OCI-LY7 (cell line): ENCODE measurements at regions of chr5 and their contacts with region 1.

Region 1: GRCh38 chr5:55575815-55576583 is 41.2 kb upstream of the PLPP1 start:
- DNase-seq: no peak
- H3K4me3 ChIP-seq: no peak overlapping the region
- H3K27ac ChIP-seq: no peak overlapping the region
- H3K4me1 ChIP-seq: no peaks in the 10 kb centered on the region
- CTCF ChIP-seq: no peak

Region 2: DNA sequence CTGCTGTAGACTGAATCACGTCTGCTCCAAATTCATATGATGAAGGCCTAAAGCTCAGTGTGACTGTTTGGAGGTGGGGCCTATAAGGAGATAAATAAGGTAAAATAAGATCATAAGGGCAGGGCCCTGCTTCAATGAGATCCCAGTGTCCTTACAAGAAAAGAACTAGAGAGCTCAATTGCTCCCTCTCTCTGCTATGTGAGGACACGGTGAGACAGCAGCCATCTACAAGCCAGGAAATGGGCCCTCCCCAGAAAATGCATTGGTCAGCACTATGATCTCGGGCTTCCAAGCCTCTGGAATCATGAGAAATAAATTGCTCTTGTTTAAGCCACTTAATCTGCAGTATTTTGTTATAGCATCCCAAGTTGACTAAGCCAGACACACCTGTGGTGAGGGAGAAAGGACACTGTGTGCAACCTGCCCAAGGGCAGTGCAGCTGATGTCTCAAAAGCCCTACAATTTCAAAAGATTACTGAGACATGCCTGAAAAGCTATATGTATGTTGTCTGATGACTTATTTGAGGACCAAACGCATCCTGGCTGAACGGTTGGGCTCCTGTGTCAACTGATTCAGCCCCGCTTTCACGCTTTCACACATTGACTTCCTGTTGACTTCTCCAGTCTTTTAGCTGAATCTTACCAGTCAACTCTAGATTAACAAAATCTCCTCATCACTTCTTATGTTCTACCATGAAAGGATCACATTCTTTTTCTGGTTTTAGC is 538.8 kb before region 1 on chr5:
- CTCF ChIA-PET with region 1: no interaction called
- POLR2A ChIA-PET with region 1: no interaction called
- intact Hi-C with region 1: no loop called
- DNase-seq: peak; percentile 22
- H3K4me3 ChIP-seq: no peak overlapping the region
- H3K27ac ChIP-seq: no peak overlapping the region
- H3K4me1 ChIP-seq: no peaks in the 10 kb centered on the region
- CTCF ChIP-seq: no peak

Region 3: GRCh38 chr5:55467862-55468551 is 108.0 kb before region 1 on chr5:
- CTCF ChIA-PET with region 1: no interaction called
- POLR2A ChIA-PET with region 1: no interaction called
- intact Hi-C with region 1: no loop called
- DNase-seq: no peak
- H3K4me3 ChIP-seq: no peak overlapping the region
- H3K27ac ChIP-seq: no peak overlapping the region
- H3K4me1 ChIP-seq: no peaks in the 10 kb centered on the region
- CTCF ChIP-seq: no peak

Region 4: GRCh38 chr5:55591686-55592085 is 15.7 kb after region 1 on chr5:
- CTCF ChIA-PET with region 1: interaction called, 11 read pairs
- POLR2A ChIA-PET with region 1: no interaction called
- intact Hi-C with region 1: no loop called
- DNase-seq: no peak
- H3K4me3 ChIP-seq: no peak overlapping the region
- H3K27ac ChIP-seq: no peak overlapping the region
- H3K4me1 ChIP-seq: no peaks in the 10 kb centered on the region
- CTCF ChIP-seq: no peak